Activated CD8-positive, alpha-beta T cell treated with anti-CD3 and anti-CD28 coated beads for 36 hours (primary cell): ENCODE measurements at regions of chr14 and their contacts with region 1.

Region 1: DNA sequence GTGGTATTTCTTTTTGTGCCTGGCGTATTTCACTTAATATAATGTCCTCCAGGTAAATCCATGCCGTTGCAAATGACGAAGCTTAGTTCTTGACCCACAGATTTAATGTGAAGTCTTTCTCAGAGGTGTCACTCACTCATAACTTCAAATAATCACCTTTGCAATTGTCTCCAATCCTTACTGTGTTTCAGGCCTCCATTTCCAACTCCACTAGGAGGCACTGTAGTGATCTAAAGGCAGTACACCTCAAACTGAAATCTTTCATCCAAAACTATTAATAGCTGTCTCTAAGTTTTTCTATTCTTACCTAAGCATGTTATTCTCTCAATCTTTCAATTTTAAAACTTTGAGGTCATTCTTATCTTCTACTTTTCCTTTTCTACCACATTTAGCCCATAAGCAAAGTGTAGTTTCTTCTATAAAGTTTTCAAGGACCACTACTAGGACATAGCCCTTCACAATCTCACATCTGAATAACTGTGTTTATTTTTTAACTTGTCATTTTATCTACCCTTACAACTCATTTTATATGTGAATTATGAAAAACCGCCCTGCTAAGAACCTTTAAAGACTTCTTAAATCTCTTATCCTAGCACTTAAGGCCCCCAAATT is 25.5 kb upstream of the FBXO34 start:
- DNase-seq: peak; percentile 47
- ATAC-seq: peak; percentile 34
- H3K4me3 Mint-ChIP-seq: no peak overlapping the region
- H3K27ac Mint-ChIP-seq: no peak overlapping the region
- H3K4me1 Mint-ChIP-seq: no peaks in the 10 kb centered on the region
- H3K27me3 Mint-ChIP-seq: peaks cover 9% of the 10 kb centered on the region
- CTCF ChIP-seq: peak; percentile 64

Region 2: DNA sequence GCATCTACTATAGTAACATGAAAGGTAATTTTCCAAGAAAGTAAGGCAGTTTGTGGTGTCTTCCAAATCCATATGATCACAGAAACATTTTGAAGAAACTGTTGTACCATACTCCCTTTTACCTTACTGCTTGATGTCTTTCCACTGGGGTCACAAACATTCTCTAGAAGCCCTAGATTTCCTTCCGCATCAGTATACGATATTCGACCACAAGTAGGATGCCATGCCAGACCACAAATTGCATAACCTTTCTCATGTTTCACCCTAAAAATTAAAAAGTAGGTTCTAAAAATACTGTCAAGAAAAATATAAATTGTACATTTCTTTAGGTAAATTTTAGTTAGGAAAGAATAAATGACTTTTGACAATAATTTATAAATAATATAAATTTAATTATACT is 245.4 kb before region 1 on chr14:
- CTCF ChIA-PET with region 1: no interaction called
- POLR2A ChIA-PET with region 1: no interaction called
- intact Hi-C with region 1: no loop called
- DNase-seq: no peak
- ATAC-seq: no peak
- H3K4me3 Mint-ChIP-seq: no peak overlapping the region
- H3K27ac Mint-ChIP-seq: no peak overlapping the region
- H3K4me1 Mint-ChIP-seq: no peaks in the 10 kb centered on the region
- H3K27me3 Mint-ChIP-seq: no peaks in the 10 kb centered on the region
- CTCF ChIP-seq: no peak

Region 3: GRCh38 chr14:55265197-55265596 is 19.4 kb after region 1 on chr14:
- CTCF ChIA-PET with region 1: interaction called, 16 read pairs
- POLR2A ChIA-PET with region 1: no interaction called
- intact Hi-C with region 1: no loop called
- DNase-seq: peak; percentile 35
- ATAC-seq: peak; percentile 64
- H3K4me3 Mint-ChIP-seq: no peak overlapping the region
- H3K27ac Mint-ChIP-seq: no peak overlapping the region
- H3K4me1 Mint-ChIP-seq: peaks cover 3% of the 10 kb centered on the region
- H3K27me3 Mint-ChIP-seq: no peaks in the 10 kb centered on the region
- CTCF ChIP-seq: no peak

Region 4: DNA sequence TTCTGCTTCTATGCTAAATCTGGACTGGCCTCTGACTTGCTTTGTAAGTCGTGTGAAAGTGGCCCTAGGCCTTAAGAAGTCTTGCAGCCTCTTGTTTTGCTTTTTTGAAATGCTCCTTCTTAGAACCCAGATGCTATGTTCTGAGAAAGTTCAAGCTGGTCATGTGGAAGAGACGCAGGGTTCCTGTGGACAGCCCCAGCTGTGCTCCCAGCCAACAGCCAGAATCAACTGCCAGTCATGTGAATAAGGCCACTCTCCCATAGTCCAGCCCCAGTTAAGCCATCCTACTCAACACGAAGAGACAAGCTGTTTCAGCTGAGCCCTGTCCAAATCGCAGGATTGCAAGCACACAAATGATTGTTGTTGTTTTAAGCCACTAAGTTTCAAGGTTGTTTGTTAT is 231.9 kb after region 1 on chr14:
- CTCF ChIA-PET with region 1: no interaction called
- POLR2A ChIA-PET with region 1: no interaction called
- intact Hi-C with region 1: no loop called
- DNase-seq: no peak
- ATAC-seq: no peak
- H3K4me3 Mint-ChIP-seq: no peak overlapping the region
- H3K27ac Mint-ChIP-seq: no peak overlapping the region
- H3K4me1 Mint-ChIP-seq: no peaks in the 10 kb centered on the region
- H3K27me3 Mint-ChIP-seq: no peaks in the 10 kb centered on the region
- CTCF ChIP-seq: no peak

Region 5: GRCh38 chr14:55488204-55488603 is 242.4 kb after region 1 on chr14:
- CTCF ChIA-PET with region 1: no interaction called
- POLR2A ChIA-PET with region 1: no interaction called
- intact Hi-C with region 1: no loop called
- DNase-seq: no peak
- ATAC-seq: no peak
- H3K4me3 Mint-ChIP-seq: no peak overlapping the region
- H3K27ac Mint-ChIP-seq: no peak overlapping the region
- H3K4me1 Mint-ChIP-seq: no peaks in the 10 kb centered on the region
- H3K27me3 Mint-ChIP-seq: no peaks in the 10 kb centered on the region
- CTCF ChIP-seq: no peak